ENCODE measurements at regions of chr20 and their contacts with region 1.

Region 1: DNA sequence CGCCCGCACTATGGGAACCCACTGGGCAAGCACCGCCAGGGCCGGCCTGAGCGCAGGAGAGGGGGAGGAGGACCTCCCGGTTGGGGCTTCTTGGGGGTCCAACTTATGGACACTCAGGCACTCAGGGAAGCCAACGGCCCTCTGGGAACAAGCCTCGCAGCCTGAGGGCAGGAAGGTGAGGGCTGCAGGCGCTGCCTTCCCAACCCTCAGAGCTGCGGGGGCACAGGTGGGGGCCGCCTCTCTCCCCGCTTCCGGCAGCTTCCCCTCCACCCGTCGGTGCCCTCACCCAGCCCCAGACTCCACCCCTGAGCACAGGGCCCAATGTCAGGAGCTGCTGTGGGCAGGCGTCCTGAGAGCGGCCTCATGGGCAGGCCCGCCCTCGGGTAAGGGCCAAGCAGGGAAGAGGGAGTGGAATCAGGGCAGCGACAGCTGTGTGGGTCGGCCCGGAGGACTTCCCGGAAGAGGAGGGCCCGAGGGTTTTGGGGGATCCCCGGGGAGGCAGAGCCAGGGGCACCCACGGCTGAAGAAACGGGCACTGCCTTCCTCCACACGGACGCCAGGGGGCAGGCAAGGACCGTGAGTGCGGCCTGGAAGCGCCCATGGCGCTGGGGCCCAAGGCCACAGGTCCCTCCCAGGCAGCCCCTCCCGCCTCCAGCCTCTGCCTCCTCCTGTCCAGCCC is 488 bp upstream of the PTK6 start:
- DNase-seq: peak; percentile 91 to 97 (median 94)
- ATAC-seq: peak; percentile 83 to 92 (median 86)
- H3K4me3 ChIP-seq: peak overlapping the region in 2 of 4 donors; percentile 26 to 38
- H3K27ac ChIP-seq: peak overlapping the region; percentile 64 to 85 (median 84)
- H3K4me1 ChIP-seq: peaks cover 4 to 10% (median 10%) of the 10 kb centered on the region in 3 donors
- H3K27me3 ChIP-seq: no peaks in the 10 kb centered on the region
- CTCF ChIP-seq: peak; percentile 93 to 98 (median 96)

Region 2: GRCh38 chr20:63973636-63974402 is 436.2 kb after region 1 on chr20:
- intact Hi-C with region 1: loop called in 2 of 3 experiments (anchors 5 to 10 kb)
- DNase-seq: peak; percentile 80 to 98 (median 92)
- ATAC-seq: peak; percentile 81 to 92 (median 86)
- H3K4me3 ChIP-seq: peak overlapping the region in 2 of 4 donors; percentile 16 to 36
- H3K27ac ChIP-seq: peak overlapping the region in 1 of 4 donors; percentile 37
- H3K4me1 ChIP-seq: peaks cover 0 to 7% (median 0%) of the 10 kb centered on the region in 3 donors
- H3K27me3 ChIP-seq: no peaks in the 10 kb centered on the region
- CTCF ChIP-seq: peak; percentile 94 to 99 (median 98)

Region 3: GRCh38 chr20:63979560-63980316 is 442.1 kb after region 1 on chr20 and contains the start of gene SAMD10:
- intact Hi-C with region 1: loop called in 1 of 3 experiments (anchors 5 kb)
- DNase-seq: peak in 4 of 6 donors; percentile 54 to 88 (median 77)
- ATAC-seq: peak; percentile 16 to 37 (median 32)
- H3K4me3 ChIP-seq: peak within 1 kb of the TSS; percentile 44 to 96 (median 66)
- H3K27ac ChIP-seq: peak within 1 kb of the TSS; percentile 76 to 83 (median 80)
- H3K4me1 ChIP-seq: peaks cover 11 to 20% (median 11%) of the 10 kb centered on the region in 3 donors
- H3K27me3 ChIP-seq: no peaks in the 10 kb centered on the region
- CTCF ChIP-seq: peak in 1 of 4 donors; percentile 23
- total RNA-seq, gene SAMD10: 1.3 to 5.2 (median 3.1) TPM